ENCODE measurements at regions of chr11 and their contacts with region 1.

Region 1: GRCh38 chr11:116505298-116506262 is 267.2 kb downstream of the BUD13 start:
- DNase-seq: peak; percentile 79
- H3K4me3 ChIP-seq: no peak overlapping the region
- H3K27ac ChIP-seq: peak overlapping the region in 1 of 2 experiments; percentile 97; a peak in 2 of 4 replicates
- H3K4me1 ChIP-seq: peaks cover 0 to 93% of the 10 kb centered on the region in 2 experiments; a peak in 2 of 4 replicates
- H3K27me3 ChIP-seq: peaks cover 23% of the 10 kb centered on the region; the same call in 1 of the 2 replicates
- CTCF ChIP-seq: no peak
- EP300 ChIP-seq: peak in 1 of 2 experiments; percentile 83; a peak in 2 of 4 replicates
- RAD21 ChIP-seq: peak; percentile 6; the same call in 1 of the 2 replicates

Region 2: GRCh38 chr11:116012055-116012454 is 493.5 kb before region 1 on chr11:
- CTCF ChIA-PET with region 1: no interaction called
- POLR2A ChIA-PET with region 1: no interaction called
- DNase-seq: no peak
- H3K4me3 ChIP-seq: no peak overlapping the region
- H3K27ac ChIP-seq: no peak overlapping the region
- H3K4me1 ChIP-seq: no peaks in the 10 kb centered on the region
- H3K27me3 ChIP-seq: no peaks in the 10 kb centered on the region
- CTCF ChIP-seq: no peak
- EP300 ChIP-seq: no peak
- RAD21 ChIP-seq: no peak

Region 3: GRCh38 chr11:116300253-116300652 is 205.3 kb before region 1 on chr11:
- CTCF ChIA-PET with region 1: no interaction called
- POLR2A ChIA-PET with region 1: no interaction called
- DNase-seq: no peak
- H3K4me3 ChIP-seq: no peak overlapping the region
- H3K27ac ChIP-seq: no peak overlapping the region
- H3K4me1 ChIP-seq: no peaks in the 10 kb centered on the region; a peak in 1 of 4 replicates
- H3K27me3 ChIP-seq: no peaks in the 10 kb centered on the region; the same call in 1 of the 2 replicates
- CTCF ChIP-seq: no peak
- EP300 ChIP-seq: no peak
- RAD21 ChIP-seq: no peak

Region 4: GRCh38 chr11:116312570-116313391 is 192.8 kb before region 1 on chr11:
- CTCF ChIA-PET with region 1: interaction called, 3 read pairs
- POLR2A ChIA-PET with region 1: interaction called, 13 read pairs
- DNase-seq: peak; percentile 88
- H3K4me3 ChIP-seq: peak overlapping the region in 1 of 2 experiments; percentile 38; a peak in 3 of 4 replicates
- H3K27ac ChIP-seq: peak overlapping the region; percentile 65 to 100
- H3K4me1 ChIP-seq: peaks cover 27 to 42% of the 10 kb centered on the region in 2 experiments
- H3K27me3 ChIP-seq: no peaks in the 10 kb centered on the region
- CTCF ChIP-seq: no peak
- EP300 ChIP-seq: peak; percentile 65 to 73; a peak in 3 of 4 replicates
- RAD21 ChIP-seq: no peak; the same call in none of the 2 replicates

Region 5: GRCh38 chr11:116386118-116386699 is 119.4 kb before region 1 on chr11:
- CTCF ChIA-PET with region 1: interaction called, 23 read pairs
- POLR2A ChIA-PET with region 1: interaction called, 45 read pairs
- DNase-seq: no peak
- H3K4me3 ChIP-seq: no peak overlapping the region
- H3K27ac ChIP-seq: peak overlapping the region in 1 of 2 experiments; percentile 96; a peak in 2 of 4 replicates
- H3K4me1 ChIP-seq: peaks cover 0 to 53% of the 10 kb centered on the region in 2 experiments; a peak in 2 of 4 replicates
- H3K27me3 ChIP-seq: no peaks in the 10 kb centered on the region
- CTCF ChIP-seq: no peak
- EP300 ChIP-seq: no peak
- RAD21 ChIP-seq: no peak

Region 6: GRCh38 chr11:116427903-116428637 is 77.5 kb before region 1 on chr11:
- CTCF ChIA-PET with region 1: interaction called, 109 read pairs
- POLR2A ChIA-PET with region 1: interaction called, 237 read pairs
- DNase-seq: peak; percentile 88
- H3K4me3 ChIP-seq: no peak overlapping the region; a peak in 1 of 4 replicates
- H3K27ac ChIP-seq: peak overlapping the region; percentile 32 to 100; a peak in 3 of 4 replicates
- H3K4me1 ChIP-seq: peaks cover 5 to 63% of the 10 kb centered on the region in 2 experiments; a peak in 3 of 4 replicates
- H3K27me3 ChIP-seq: no peaks in the 10 kb centered on the region
- CTCF ChIP-seq: no peak
- EP300 ChIP-seq: peak; percentile 27 to 97; a peak in 3 of 4 replicates
- RAD21 ChIP-seq: peak; percentile 50

Region 7: GRCh38 chr11:116471608-116472256 is 33.8 kb before region 1 on chr11:
- CTCF ChIA-PET with region 1: interaction called, 30 read pairs
- POLR2A ChIA-PET with region 1: interaction called, 11 read pairs
- DNase-seq: no peak
- H3K4me3 ChIP-seq: no peak overlapping the region
- H3K27ac ChIP-seq: peak overlapping the region in 1 of 2 experiments; percentile 94; a peak in 1 of 4 replicates
- H3K4me1 ChIP-seq: peaks cover 0 to 32% of the 10 kb centered on the region in 2 experiments; a peak in 2 of 4 replicates
- H3K27me3 ChIP-seq: no peaks in the 10 kb centered on the region
- CTCF ChIP-seq: no peak
- EP300 ChIP-seq: no peak
- RAD21 ChIP-seq: no peak

Measured in SK-N-SH (cell line).